ENCODE measurements at regions of chr7 and their contacts with region 1.

Region 1: DNA sequence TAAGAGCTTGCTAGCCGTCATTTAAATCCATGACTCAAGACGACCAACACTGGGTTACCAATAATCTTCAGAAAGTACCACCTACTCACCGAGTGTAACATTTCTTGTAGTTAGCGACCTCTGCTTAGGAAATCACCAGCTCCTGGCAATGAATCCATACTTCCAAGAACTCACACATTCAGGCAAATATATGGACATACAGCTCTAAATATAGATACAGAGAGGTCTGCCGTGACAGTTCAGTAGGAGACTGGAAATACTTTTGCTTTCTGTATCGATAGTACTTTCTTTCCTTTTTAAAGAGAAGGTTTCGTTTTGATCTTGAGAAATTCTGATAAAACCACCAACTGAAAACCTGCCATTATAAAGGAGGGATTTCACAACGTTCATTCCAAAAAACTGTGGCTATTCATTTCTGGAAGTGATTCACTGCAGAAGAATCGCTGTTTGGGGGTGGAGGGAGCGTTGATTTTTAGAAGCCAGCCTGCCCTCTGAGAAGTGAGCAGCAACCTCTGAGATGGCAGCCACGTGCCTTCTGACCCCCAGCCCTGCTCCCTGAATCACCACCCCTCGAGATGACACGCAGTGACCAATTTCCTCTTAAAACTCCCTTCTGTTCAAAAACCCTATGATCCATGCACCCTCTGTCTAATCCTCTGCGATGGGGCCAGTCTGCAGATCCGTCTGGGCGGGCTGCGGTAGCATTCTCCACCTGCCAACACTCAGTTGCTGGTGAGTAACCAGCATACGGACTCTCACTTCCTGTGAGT is 179.0 kb upstream of the KLF14 start:
- DNase-seq: peak; percentile 94
- H3K4me3 Mint-ChIP-seq: peak overlapping the region; percentile 77
- H3K27ac Mint-ChIP-seq: peak overlapping the region; percentile 91
- H3K4me1 Mint-ChIP-seq: peaks cover 81% of the 10 kb centered on the region
- H3K27me3 Mint-ChIP-seq: no peaks in the 10 kb centered on the region

Region 2: GRCh38 chr7:130649004-130649790 is 263.9 kb before region 1 on chr7:
- intact Hi-C with region 1: loop called (anchors 2 kb)
- DNase-seq: peak; percentile 67
- H3K4me3 Mint-ChIP-seq: peak overlapping the region; percentile 50
- H3K27ac Mint-ChIP-seq: peak overlapping the region; percentile 86
- H3K4me1 Mint-ChIP-seq: peaks cover 35% of the 10 kb centered on the region
- H3K27me3 Mint-ChIP-seq: no peaks in the 10 kb centered on the region

Region 3: GRCh38 chr7:130926001-130926691 is 13.1 kb after region 1 on chr7:
- intact Hi-C with region 1: loop called (anchors 1 kb)
- DNase-seq: peak; percentile 80
- H3K4me3 Mint-ChIP-seq: peak overlapping the region; percentile 66
- H3K27ac Mint-ChIP-seq: peak overlapping the region; percentile 82
- H3K4me1 Mint-ChIP-seq: peaks cover 68% of the 10 kb centered on the region
- H3K27me3 Mint-ChIP-seq: no peaks in the 10 kb centered on the region

Region 4: GRCh38 chr7:130961128-130961601 is 48.1 kb after region 1 on chr7:
- intact Hi-C with region 1: loop called (anchors 1 kb)
- DNase-seq: peak; percentile 96
- H3K4me3 Mint-ChIP-seq: peak overlapping the region; percentile 88
- H3K27ac Mint-ChIP-seq: peak overlapping the region; percentile 97
- H3K4me1 Mint-ChIP-seq: peaks cover 36% of the 10 kb centered on the region
- H3K27me3 Mint-ChIP-seq: no peaks in the 10 kb centered on the region

Region 5: DNA sequence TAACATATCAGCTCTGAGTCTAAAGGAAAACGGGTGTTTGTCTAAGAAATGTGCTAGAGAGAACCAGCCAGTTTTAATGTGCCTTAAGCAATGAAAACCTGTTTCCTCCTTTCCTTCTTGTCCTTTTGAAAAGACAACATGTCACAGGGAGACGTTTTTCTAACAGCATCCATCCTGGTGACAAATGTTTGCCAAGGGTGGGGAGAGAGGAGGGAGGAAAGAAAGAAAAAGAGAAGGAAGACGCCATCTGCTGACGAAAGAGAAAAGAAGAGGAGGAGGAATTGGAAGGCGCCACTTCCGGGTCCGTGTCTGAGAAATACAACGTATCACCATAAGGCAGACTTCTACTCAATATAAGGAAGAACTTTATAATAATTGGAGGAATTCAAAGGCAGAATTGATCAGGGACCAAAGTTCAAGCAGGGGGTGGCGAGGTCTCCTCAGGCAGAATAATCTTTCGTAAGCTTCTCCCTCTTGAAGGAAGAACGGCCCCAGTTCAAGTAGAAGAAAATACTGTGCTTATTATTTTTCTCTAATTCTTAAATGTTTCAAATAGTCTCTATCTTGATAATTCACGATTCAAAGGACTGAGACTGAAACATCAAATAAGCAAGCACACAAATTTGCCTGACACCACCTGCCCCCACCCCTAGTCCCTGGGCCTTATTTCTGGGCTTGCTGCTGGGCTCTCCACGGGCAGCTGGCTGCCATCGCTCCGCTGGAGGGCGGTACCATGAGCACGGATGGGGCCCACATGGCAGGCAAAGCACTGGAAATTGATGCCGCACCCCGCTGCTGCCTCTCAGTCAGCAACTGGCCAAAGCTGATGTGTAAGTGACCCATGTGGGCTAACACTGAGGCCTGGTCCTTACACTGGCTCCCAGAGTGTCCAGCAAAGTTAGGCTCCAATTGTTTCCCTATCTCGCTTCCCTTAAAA is 94.6 kb after region 1 on chr7:
- intact Hi-C with region 1: loop called (anchors 1 kb)
- DNase-seq: peak; percentile 89
- H3K4me3 Mint-ChIP-seq: peak overlapping the region; percentile 41
- H3K27ac Mint-ChIP-seq: peak overlapping the region; percentile 86
- H3K4me1 Mint-ChIP-seq: peaks cover 54% of the 10 kb centered on the region
- H3K27me3 Mint-ChIP-seq: no peaks in the 10 kb centered on the region

Region 6: DNA sequence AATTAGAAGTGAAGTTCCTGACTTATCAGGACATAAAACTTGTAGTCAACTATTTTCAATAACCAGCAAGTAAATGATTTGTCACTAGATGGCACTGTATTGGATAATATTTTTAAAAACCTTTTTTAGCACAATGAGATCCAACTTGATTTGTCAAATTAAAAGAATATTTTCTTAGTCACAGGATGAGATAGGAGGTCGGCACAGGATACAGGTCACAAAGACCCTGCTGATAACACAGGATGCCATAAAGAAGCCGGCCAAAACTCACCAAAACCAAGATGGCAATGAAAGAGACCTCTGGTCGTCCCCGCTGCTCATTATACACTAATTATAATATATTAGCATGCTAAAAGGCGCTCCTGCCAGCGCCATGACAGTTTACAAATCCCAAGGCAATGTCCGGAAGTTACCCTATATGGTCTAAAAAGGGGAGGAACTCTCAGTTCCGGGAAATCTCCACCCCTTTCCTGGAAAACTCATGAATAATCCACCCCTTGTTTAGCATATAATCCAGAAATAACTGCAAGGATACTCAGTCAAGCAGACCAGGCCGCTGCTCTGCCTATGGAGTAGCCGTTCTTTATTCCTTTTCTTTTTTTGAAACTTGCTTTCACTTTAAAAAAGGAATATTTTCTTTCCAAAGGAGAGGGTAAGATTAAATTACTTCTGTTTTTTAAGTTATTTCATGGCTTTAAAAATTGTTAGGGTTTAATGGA is 158.9 kb after region 1 on chr7:
- intact Hi-C with region 1: no loop called
- DNase-seq: peak; percentile 78
- H3K4me3 Mint-ChIP-seq: peak overlapping the region; percentile 16
- H3K27ac Mint-ChIP-seq: no peak overlapping the region
- H3K4me1 Mint-ChIP-seq: peaks cover 35% of the 10 kb centered on the region
- H3K27me3 Mint-ChIP-seq: no peaks in the 10 kb centered on the region

Region 7: GRCh38 chr7:131139462-131139861 is 226.4 kb after region 1 on chr7:
- intact Hi-C with region 1: no loop called
- DNase-seq: no peak
- H3K4me3 Mint-ChIP-seq: no peak overlapping the region
- H3K27ac Mint-ChIP-seq: no peak overlapping the region
- H3K4me1 Mint-ChIP-seq: peaks cover 10% of the 10 kb centered on the region
- H3K27me3 Mint-ChIP-seq: no peaks in the 10 kb centered on the region

Region 8: DNA sequence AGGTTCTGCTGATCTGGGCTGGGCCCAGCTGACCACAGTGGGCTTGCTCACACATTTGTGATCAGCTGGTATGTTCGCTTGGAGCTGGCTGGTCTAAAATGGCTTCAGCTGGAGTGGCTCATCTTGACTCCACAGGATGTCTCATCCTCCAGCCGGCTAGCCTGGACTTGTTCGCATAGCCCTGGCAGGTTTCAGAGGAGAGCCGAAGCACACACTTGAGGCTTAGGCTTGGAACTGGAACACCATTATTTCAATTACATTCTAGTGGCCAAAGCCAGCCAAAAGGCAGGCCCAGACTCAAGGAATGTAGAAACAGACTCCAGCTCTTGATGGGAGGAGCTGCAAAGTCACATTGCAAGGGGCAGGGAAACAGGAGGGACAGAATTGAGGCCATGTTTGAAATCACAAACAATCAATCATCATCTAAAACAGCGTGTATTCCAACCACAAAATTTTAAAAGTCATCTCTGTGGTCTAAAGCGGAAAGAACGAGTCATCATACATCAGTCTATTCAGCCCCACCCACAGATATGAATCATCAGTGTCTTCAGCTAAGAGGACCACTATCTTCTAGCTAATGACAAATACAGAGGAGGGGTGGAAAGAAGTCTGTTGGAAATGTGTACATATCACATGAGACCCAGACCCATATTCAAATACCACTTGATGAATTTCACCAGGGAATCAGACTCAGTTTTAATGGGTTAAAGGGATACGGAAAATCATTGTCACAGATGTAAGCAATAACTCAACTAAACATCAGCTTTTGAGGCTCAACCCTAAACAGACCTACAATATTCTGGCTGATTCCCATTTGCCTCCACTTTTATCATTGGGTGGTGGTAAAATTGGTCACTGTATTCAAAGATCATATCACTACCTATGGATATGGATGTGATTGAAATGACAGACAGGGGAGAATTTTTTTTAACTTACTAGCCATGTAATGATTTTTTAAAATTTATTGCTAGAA is 275.6 kb after region 1 on chr7:
- intact Hi-C with region 1: loop called (anchors 2 kb)
- DNase-seq: peak; percentile 89
- H3K4me3 Mint-ChIP-seq: peak overlapping the region; percentile 38
- H3K27ac Mint-ChIP-seq: peak overlapping the region; percentile 90
- H3K4me1 Mint-ChIP-seq: peaks cover 47% of the 10 kb centered on the region
- H3K27me3 Mint-ChIP-seq: no peaks in the 10 kb centered on the region

Measured in activated CD4-positive, alpha-beta T cell treated with anti-CD3 and anti-CD28 coated beads, Interleukin-2, amount 10 ng/mL, durations not matched to agents 24 days and 14 days (primary cell).